ENCODE measurements at regions of chr15 and their contacts with region 1.

Region 1: DNA sequence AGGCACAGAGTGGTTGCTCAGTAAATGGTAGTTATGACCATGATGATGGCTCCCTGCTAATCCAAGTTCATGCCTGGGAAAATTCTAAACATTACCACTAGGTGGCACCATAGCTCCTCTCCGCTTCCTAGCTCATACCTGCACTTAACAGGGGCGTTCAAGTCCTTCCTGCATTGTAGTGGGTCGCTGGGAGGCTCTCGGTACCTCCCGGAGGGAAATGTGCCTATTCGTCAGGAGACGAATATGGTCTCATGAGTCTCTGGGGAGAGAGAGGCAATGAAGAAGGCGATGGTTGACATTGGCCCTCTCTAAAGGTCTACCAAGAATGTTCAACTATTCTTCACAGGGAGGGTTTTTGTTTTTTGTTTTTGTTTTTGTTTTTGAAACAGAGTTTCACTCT is 10.9 kb downstream of the MESP1 start:
- DNase-seq: peak; percentile 74
- H3K4me3 Mint-ChIP-seq: no peak overlapping the region
- H3K27ac Mint-ChIP-seq: no peak overlapping the region
- H3K4me1 Mint-ChIP-seq: peaks cover 1% of the 10 kb centered on the region
- H3K27me3 Mint-ChIP-seq: peaks cover 3% of the 10 kb centered on the region

Region 2: GRCh38 chr15:89728254-89728653 is 11.9 kb before region 1 on chr15:
- CTCF ChIA-PET with region 1: interaction called, 10 read pairs
- POLR2A ChIA-PET with region 1: no interaction called
- DNase-seq: no peak
- H3K4me3 Mint-ChIP-seq: no peak overlapping the region
- H3K27ac Mint-ChIP-seq: no peak overlapping the region
- H3K4me1 Mint-ChIP-seq: no peaks in the 10 kb centered on the region
- H3K27me3 Mint-ChIP-seq: peaks cover 6% of the 10 kb centered on the region